ENCODE measurements at regions of chr12 and their contacts with region 1.

Region 1: DNA sequence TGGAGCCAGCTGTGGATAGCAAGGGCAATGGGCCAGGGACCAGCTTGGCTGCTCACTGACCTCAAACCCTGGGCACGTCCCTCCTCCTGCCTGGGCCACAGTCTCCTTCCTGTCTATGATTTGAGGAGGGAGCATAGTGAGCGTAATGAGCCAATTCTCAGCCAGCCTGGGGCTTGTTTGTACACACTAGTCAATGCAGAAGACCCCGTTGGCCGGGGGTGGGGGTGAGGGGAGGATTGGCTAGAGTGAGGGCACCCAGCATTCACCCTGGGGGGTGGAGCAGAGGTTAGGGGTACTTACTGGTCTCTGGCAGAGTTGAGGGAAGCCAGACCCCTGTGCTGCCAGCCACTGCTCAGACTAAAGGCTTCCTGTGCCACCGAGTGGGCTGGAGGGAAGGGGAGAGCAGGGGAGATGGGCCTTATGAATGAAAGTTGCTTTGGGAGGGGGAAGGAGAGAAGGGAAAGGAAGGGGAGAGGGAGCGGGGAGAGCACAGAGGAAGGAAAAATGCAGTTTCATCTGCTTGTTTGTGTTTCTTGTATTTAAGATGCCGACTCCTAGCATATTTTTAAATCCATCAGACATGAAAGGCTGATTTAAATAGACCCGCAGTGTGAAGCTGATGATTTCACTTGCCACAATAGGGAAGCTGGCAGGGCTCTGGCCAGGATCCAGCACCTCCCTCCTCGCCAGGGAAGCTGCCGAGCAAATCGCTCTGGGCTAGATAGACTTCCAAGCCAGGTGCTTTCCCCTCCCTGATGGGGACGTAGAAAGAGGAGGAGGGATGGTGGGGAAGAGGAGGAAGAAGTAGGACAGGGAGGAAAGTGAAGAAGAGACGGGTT is 114.0 kb downstream of the PRMT8 start:
- DNase-seq: no peak
- H3K4me3 ChIP-seq: no peak overlapping the region
- H3K27ac ChIP-seq: no peak overlapping the region
- H3K4me1 ChIP-seq: peaks cover 9 to 26% (median 10%) of the 10 kb centered on the region in 4 donors
- H3K27me3 ChIP-seq: peaks cover 0 to 29% (median 6%) of the 10 kb centered on the region in 4 donors
- CTCF ChIP-seq: no peak
- EP300 ChIP-seq: no peak
- POLR2A ChIP-seq: no peak

Region 2: DNA sequence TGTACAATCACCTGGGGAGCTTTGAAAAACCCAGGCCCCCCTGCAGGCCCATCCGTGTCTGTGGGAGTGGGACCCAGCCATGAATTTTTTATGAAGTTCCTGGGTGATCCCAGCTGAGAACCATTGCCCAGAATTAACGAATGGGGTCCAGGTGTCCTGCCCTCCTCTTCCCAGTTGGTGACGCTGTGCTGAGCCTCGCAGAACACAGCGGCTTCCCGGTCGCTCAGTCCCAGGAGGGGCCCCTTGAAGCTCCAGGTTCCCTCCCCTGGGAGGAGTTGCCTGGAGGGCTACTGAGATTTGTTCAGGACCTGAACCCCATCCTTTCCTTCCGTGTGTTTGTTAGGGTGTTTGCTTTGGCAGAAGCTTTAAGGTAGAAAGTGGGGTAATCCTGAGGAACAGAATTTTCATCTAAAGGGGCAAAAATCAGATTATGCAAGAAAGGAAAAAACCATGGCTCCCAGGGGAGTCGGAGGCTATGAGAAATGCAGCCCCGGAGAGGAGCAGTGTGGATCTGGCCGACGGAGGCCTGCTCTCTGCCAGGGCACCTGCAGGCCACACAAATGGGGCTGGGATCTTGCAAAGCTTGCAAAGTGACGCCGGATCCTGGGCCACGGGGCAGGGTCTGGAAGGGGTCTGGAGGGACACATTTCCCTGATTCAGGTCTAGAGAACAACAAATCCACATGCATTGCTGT is 278.7 kb before region 1 on chr12:
- intact Hi-C with region 1: loop called (anchors 5 kb)
- DNase-seq: no peak
- H3K4me3 ChIP-seq: no peak overlapping the region
- H3K27ac ChIP-seq: no peak overlapping the region
- H3K4me1 ChIP-seq: no peaks in the 10 kb centered on the region
- H3K27me3 ChIP-seq: peaks cover 0 to 7% (median 0%) of the 10 kb centered on the region in 4 donors
- CTCF ChIP-seq: no peak
- EP300 ChIP-seq: no peak
- POLR2A ChIP-seq: no peak

Region 3: DNA sequence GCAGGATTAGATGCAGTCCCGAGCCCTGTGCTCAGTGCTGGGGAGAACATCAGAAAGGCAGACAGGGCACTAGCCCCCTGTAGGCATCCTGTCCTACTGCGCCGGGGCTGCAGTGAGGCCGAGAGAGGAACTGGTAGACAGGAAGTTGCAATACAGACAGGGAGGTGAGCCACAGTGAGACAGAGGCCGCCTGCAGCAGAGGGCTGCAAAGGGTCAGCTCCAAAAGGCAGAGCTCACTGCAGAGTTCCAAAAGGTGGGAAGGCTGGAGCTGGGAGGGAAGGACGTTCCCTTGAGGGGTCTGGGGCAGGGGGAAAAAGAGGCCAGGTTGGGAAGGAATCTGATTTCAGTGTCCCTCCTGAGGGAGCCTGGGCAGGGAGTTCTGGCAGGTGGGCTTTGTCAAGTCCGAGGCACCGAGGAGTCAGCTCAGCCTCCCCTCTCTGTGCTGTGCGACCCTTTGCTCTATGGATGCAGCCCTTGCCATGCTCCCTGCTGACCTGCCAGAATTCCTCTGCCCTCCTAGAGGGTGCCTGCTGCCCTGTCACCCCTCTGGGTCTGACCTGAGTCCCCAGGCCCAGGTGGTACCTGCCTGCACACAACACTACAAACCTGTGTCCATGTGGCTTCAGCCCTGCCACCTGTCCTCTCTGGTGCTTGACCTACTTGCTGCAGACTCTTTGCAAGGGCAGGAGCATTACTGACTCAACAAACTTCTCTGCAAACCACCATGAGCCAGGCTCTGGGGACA is 50.4 kb before region 1 on chr12:
- intact Hi-C with region 1: no loop called
- DNase-seq: no peak
- H3K4me3 ChIP-seq: no peak overlapping the region
- H3K27ac ChIP-seq: no peak overlapping the region
- H3K4me1 ChIP-seq: peaks cover 0 to 12% (median 7%) of the 10 kb centered on the region in 4 donors
- H3K27me3 ChIP-seq: peaks cover 0 to 4% (median 0%) of the 10 kb centered on the region in 4 donors
- CTCF ChIP-seq: no peak
- EP300 ChIP-seq: no peak
- POLR2A ChIP-seq: no peak

Measured in esophagus muscularis mucosa (tissue), 4 donors.